HCT116 (cell line): ENCODE measurements at regions of chr14 and their contacts with region 1.

Region 1: GRCh38 chr14:35215110-35215876 is 76.9 kb upstream of the PSMA6 start:
- DNase-seq: peak; percentile 38
- ATAC-seq: peak; percentile 73
- H3K4me3 ChIP-seq: no peak overlapping the region
- H3K27ac ChIP-seq: no peak overlapping the region
- H3K4me1 ChIP-seq: peaks cover 22 to 23% of the 10 kb centered on the region in 2 experiments
- H3K27me3 ChIP-seq: no peaks in the 10 kb centered on the region
- CTCF ChIP-seq: peak; percentile 35 to 66 (median 48); a peak in 5 of 6 replicates
- POLR2A ChIP-seq: no peak
- RAD21 ChIP-seq: peak; percentile 75

Region 2: GRCh38 chr14:35229495-35230089 is 14.3 kb after region 1 on chr14:
- CTCF ChIA-PET with region 1: interaction called, 12 read pairs
- POLR2A ChIA-PET with region 1: no interaction called
- RAD21 ChIA-PET with region 1: interaction called in 1 of 2 experiments, 4 read pairs
- intact Hi-C with region 1: no loop called
- DNase-seq: no peak
- ATAC-seq: peak; percentile 62; the same call in 1 of the 2 replicates
- H3K4me3 ChIP-seq: no peak overlapping the region
- H3K27ac ChIP-seq: no peak overlapping the region
- H3K4me1 ChIP-seq: no peaks in the 10 kb centered on the region
- H3K27me3 ChIP-seq: no peaks in the 10 kb centered on the region
- CTCF ChIP-seq: peak; percentile 25 to 52 (median 44); a peak in 4 of 6 replicates
- POLR2A ChIP-seq: no peak
- RAD21 ChIP-seq: peak; percentile 62